ENCODE measurements at regions of chr7 and their contacts with region 1.

Region 1: GRCh38 chr7:65037740-65038678 is 31.5 kb upstream of the ERV3-1 start:
- DNase-seq: peak; percentile 76 to 92
- H3K4me3 ChIP-seq: peak overlapping the region; percentile 64; the same call in 1 of the 2 replicates
- H3K27ac ChIP-seq: peak overlapping the region; percentile 70
- H3K4me1 ChIP-seq: peaks cover 10% of the 10 kb centered on the region
- H3K27me3 ChIP-seq: no peaks in the 10 kb centered on the region
- CTCF ChIP-seq: no peak

Region 2: GRCh38 chr7:64665980-64666662 is 371.9 kb before region 1 on chr7 and contains the start of gene ZNF107:
- CTCF ChIA-PET with region 1: no interaction called
- POLR2A ChIA-PET with region 1: interaction called, 11 read pairs
- intact Hi-C with region 1: no loop called
- DNase-seq: peak; percentile 88 to 90
- H3K4me3 ChIP-seq: peak within 1 kb of the TSS; percentile 69
- H3K27ac ChIP-seq: no peak within 1 kb of the TSS
- H3K4me1 ChIP-seq: peaks cover 9% of the 10 kb centered on the region
- H3K27me3 ChIP-seq: no peaks in the 10 kb centered on the region
- CTCF ChIP-seq: no peak
- total RNA-seq, gene ZNF107: 4.8 and 6.0 TPM in 2 replicates

Region 3: GRCh38 chr7:64887756-64888508 is 150.1 kb before region 1 on chr7:
- CTCF ChIA-PET with region 1: no interaction called
- POLR2A ChIA-PET with region 1: no interaction called
- intact Hi-C with region 1: no loop called
- DNase-seq: peak in 1 of 2 experiments; percentile 14
- H3K4me3 ChIP-seq: no peak overlapping the region
- H3K27ac ChIP-seq: no peak overlapping the region
- H3K4me1 ChIP-seq: no peaks in the 10 kb centered on the region
- H3K27me3 ChIP-seq: peaks cover 50% of the 10 kb centered on the region
- CTCF ChIP-seq: no peak; the same call in 1 of the 2 replicates

Region 4: GRCh38 chr7:64951250-64951848 is 86.7 kb before region 1 on chr7:
- CTCF ChIA-PET with region 1: interaction called, 12 read pairs
- POLR2A ChIA-PET with region 1: no interaction called
- intact Hi-C with region 1: no loop called
- DNase-seq: no peak
- H3K4me3 ChIP-seq: no peak overlapping the region
- H3K27ac ChIP-seq: no peak overlapping the region
- H3K4me1 ChIP-seq: no peaks in the 10 kb centered on the region
- H3K27me3 ChIP-seq: no peaks in the 10 kb centered on the region
- CTCF ChIP-seq: peak; percentile 86

Region 5: GRCh38 chr7:65006094-65006992 is 31.7 kb before region 1 on chr7 and contains the start of gene ERV3-1:
- CTCF ChIA-PET with region 1: no interaction called
- POLR2A ChIA-PET with region 1: interaction called, 9 read pairs
- intact Hi-C with region 1: loop called (anchors 1 kb)
- DNase-seq: peak; percentile 90 to 91
- H3K4me3 ChIP-seq: peak within 1 kb of the TSS; percentile 77
- H3K27ac ChIP-seq: peak within 1 kb of the TSS; percentile 35; the same call in 1 of the 2 replicates
- H3K4me1 ChIP-seq: peaks cover 8% of the 10 kb centered on the region; the same call in 1 of the 2 replicates
- H3K27me3 ChIP-seq: no peaks in the 10 kb centered on the region
- CTCF ChIP-seq: no peak
- total RNA-seq, gene ERV3-1: 14.0 and 22.5 TPM in 2 replicates

Region 6: GRCh38 chr7:65216459-65216858 is 178.4 kb after region 1 on chr7:
- CTCF ChIA-PET with region 1: no interaction called
- POLR2A ChIA-PET with region 1: no interaction called
- intact Hi-C with region 1: no loop called
- DNase-seq: peak; percentile 35 to 61
- H3K4me3 ChIP-seq: no peak overlapping the region
- H3K27ac ChIP-seq: no peak overlapping the region
- H3K4me1 ChIP-seq: no peaks in the 10 kb centered on the region
- H3K27me3 ChIP-seq: no peaks in the 10 kb centered on the region
- CTCF ChIP-seq: peak; percentile 82

Measured in PC-9 (cell line).